ENCODE measurements at regions of chr6 and their contacts with region 1.

Region 1: DNA sequence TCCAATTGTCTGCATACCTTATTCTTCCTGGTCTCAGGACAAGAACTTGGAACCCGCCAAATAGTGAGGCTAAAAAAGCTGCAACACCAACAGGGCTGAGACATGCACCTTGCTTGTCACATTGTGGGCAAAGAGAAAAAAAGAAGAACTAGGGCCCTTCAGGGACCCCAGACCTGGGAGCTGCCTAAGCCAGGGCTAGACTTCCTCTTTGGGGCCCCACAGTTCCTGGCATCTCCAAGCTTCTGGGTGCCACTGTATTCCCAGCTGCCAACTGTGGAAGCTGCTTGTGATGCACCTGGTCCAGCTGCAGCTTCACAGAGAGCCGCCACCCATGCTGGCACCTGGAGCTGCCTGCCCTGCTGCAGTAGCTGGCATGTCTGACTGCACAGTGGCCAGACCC is 370.6 kb downstream of the CD83 start:
- H3K4me3 ChIP-seq: no peak overlapping the region
- H3K27ac ChIP-seq: no peak overlapping the region
- H3K4me1 ChIP-seq: no peaks in the 10 kb centered on the region
- CTCF ChIP-seq: no peak

Region 2: GRCh38 chr6:14192216-14192788 is 295.9 kb before region 1 on chr6:
- CTCF ChIA-PET with region 1: interaction called, 10 read pairs
- POLR2A ChIA-PET with region 1: no interaction called
- H3K4me3 ChIP-seq: no peak overlapping the region
- H3K27ac ChIP-seq: no peak overlapping the region
- H3K4me1 ChIP-seq: peaks cover 28% of the 10 kb centered on the region
- CTCF ChIP-seq: no peak

Region 3: DNA sequence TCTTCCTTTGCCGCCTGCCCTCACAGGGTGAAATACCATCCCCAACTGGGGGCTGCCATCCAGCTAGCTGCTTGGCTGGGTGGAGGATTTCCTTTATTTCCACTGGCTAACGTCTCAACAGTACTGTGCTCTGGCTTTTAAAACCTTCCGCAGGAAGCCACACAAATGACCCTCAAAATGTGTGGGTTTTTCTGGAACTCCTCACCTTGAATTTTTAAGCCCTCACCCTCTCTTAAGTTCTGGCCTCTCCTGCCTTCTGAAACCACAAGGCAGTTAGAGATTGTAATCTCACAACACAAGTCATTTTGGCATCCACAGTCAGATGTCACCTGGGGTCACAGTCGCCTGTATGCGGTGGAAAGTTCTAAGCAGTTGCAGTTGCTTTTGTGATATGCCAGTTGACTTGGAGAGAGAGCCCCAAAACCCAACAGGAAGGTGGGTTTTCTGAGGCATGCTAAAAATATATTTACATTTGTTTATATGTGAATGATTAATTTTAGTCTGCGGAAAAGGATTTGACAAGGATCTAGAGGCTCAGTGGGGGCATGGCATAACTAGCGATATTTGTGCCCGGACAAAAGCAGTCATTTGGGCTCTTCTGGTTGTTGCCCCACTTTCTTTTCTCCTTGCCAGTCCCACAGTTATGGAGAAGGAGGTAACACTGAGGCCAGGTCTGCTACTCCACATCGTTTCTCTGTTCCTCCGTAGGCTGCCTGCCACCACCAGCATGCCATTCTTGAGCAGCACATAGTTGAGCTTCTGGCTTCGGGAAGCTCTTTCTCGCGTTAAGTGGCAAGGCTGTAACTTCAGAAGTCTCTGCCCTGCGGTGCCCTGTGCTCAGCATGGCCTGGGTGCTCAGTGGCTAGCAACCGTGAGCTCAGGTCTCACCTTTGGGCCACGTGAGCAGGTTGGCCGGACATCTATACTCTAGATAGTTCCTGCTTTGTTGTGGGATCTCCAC is 35.3 kb before region 1 on chr6:
- CTCF ChIA-PET with region 1: no interaction called
- POLR2A ChIA-PET with region 1: no interaction called
- H3K4me3 ChIP-seq: no peak overlapping the region
- H3K27ac ChIP-seq: no peak overlapping the region
- H3K4me1 ChIP-seq: peaks cover 4% of the 10 kb centered on the region; the same call in 1 of the 2 replicates
- CTCF ChIP-seq: no peak

Region 4: GRCh38 chr6:14477559-14477958 is 10.6 kb before region 1 on chr6:
- CTCF ChIA-PET with region 1: no interaction called
- POLR2A ChIA-PET with region 1: no interaction called
- H3K4me3 ChIP-seq: no peak overlapping the region
- H3K27ac ChIP-seq: no peak overlapping the region
- H3K4me1 ChIP-seq: no peaks in the 10 kb centered on the region
- CTCF ChIP-seq: no peak

Measured in HEK293 (cell line).